ENCODE measurements at regions of chr10 and their contacts with region 1.

Region 1: DNA sequence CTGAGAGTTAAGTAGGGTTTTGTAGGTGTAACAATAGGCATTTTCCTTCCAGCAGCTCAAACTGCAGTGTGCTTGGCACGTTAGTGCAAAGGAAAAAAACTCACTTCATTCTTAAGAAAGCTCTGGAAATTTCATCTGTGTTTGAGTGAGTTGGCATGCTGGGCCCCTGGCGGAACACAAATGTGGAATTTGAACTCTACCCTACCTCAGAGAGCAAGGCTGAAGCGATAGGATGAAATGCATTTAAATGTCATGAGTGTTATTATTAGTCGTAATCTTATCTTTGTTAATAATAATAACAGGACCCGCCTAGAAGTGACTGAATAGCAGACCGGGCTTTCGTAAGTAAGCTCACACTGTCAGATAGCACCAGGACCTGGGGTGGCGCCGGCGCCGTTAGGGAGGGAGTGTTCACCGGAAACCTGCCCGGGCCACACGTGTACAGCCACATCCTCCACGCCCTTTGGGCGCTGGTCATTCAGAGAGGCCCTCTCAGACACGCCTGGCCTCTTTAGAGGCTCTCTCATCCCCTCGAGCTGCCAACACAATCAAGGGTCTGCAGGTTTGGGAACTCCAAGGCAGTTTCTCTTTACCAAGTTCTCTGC is 63.5 kb downstream of the GRK5 start:
- DNase-seq: no peak
- ATAC-seq: peak; percentile 88
- H3K4me3 ChIP-seq: peak overlapping the region; percentile 22 to 47
- H3K27ac ChIP-seq: peak overlapping the region; percentile 93
- H3K4me1 ChIP-seq: peaks cover 73% of the 10 kb centered on the region
- H3K27me3 ChIP-seq: no peaks in the 10 kb centered on the region
- CTCF ChIP-seq: no peak

Region 2: DNA sequence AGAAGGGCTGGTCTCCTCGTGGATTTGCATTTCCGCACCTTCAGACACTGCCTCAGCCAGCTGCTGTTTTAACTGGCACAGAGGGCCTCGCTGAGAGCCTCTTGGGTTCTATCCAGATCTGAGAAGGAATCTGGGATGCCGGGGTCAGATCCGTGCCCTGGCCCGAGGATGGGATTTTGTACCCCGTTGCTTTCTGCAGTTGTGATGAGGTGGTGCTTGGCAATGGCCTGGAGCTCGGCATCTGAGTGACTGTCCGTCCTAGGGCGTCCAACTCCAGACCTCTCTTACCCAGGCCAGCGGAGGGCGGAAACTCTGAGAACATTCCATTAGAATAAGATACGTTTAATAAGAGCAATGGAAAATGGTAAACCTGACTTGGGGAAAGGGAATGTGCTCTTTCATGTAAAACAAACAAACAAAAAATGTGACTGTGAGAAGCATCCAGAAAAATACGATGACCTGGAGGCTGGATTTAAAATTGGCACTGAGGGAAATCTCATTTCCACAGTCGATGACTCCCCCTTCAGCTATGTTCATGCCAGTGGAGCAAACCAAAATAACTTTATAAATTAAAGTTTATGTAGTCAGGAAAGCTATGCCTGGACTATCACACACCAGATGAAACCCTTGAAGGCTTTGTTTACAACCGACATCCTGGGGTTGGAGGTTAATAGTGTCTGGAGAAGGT is 23.9 kb before region 1 on chr10:
- CTCF ChIA-PET with region 1: interaction called, 8 read pairs
- POLR2A ChIA-PET with region 1: interaction called, 10 read pairs
- in situ Hi-C with region 1: no loop called
- intact Hi-C with region 1: no loop called
- DNase-seq: no peak
- ATAC-seq: peak; percentile 76
- H3K4me3 ChIP-seq: peak overlapping the region; percentile 9 to 25; a peak in 3 of 4 replicates
- H3K27ac ChIP-seq: peak overlapping the region; percentile 87
- H3K4me1 ChIP-seq: peaks cover 54% of the 10 kb centered on the region
- H3K27me3 ChIP-seq: no peaks in the 10 kb centered on the region
- CTCF ChIP-seq: no peak

Region 3: DNA sequence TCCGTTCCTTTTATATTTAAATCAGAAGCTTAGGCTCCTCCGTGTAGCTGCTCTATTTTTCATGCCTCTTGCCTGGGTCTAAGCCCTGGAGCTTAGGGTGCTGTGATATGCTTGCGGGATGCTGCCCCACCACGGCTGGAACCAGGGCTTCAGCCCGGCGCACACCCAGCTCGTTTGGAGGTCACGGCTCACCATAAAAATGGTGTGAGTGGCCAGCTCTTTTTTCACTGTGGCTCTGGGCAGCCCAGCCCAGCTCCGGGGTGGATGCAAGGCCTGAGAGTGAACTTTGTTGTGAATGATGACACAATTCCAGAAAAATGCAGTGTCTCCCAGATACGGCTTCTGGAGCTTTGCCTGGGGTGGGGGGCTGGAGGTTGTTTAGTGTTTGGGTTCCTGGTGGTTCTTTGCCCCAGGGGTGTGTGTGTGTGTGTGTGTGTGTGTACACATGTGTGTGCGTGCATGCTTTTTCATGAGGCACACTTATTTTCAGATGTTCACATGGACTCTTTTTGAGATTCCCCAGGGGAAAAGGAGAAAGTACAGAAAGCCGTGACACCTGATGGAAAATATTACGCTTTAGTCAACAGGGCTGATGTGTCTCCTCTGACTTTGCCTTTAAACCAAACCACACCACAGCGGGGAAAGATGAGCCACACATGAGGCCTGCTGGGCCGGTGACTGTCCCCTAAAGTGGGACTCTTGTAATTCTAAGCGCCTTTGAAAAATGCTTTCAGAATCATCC is 17.3 kb before region 1 on chr10:
- CTCF ChIA-PET with region 1: interaction called, 8 read pairs
- POLR2A ChIA-PET with region 1: interaction called, 13 read pairs
- in situ Hi-C with region 1: no loop called
- intact Hi-C with region 1: no loop called
- DNase-seq: peak; percentile 92
- ATAC-seq: peak; percentile 72
- H3K4me3 ChIP-seq: peak overlapping the region in 1 of 2 experiments; percentile 2; a peak in 2 of 4 replicates
- H3K27ac ChIP-seq: peak overlapping the region; percentile 93
- H3K4me1 ChIP-seq: peaks cover 66% of the 10 kb centered on the region
- H3K27me3 ChIP-seq: no peaks in the 10 kb centered on the region
- CTCF ChIP-seq: no peak

Region 4: GRCh38 chr10:120105001-120105400 is 834.1 kb after region 1 on chr10:
- CTCF ChIA-PET with region 1: no interaction called
- POLR2A ChIA-PET with region 1: no interaction called
- in situ Hi-C with region 1: no loop called
- intact Hi-C with region 1: no loop called
- DNase-seq: no peak
- ATAC-seq: no peak
- H3K4me3 ChIP-seq: no peak overlapping the region
- H3K27ac ChIP-seq: no peak overlapping the region
- H3K4me1 ChIP-seq: no peaks in the 10 kb centered on the region
- H3K27me3 ChIP-seq: peaks cover 3% of the 10 kb centered on the region; the same call in 1 of the 2 replicates
- CTCF ChIP-seq: no peak

Region 5: GRCh38 chr10:120953897-120954296 is 1683.0 kb after region 1 on chr10:
- CTCF ChIA-PET with region 1: no interaction called
- POLR2A ChIA-PET with region 1: no interaction called
- in situ Hi-C with region 1: no loop called
- intact Hi-C with region 1: no loop called
- DNase-seq: no peak
- ATAC-seq: no peak
- H3K4me3 ChIP-seq: no peak overlapping the region
- H3K27ac ChIP-seq: no peak overlapping the region
- H3K4me1 ChIP-seq: peaks cover 8% of the 10 kb centered on the region
- H3K27me3 ChIP-seq: peaks cover 22% of the 10 kb centered on the region
- CTCF ChIP-seq: no peak